Posterior vena cava (tissue), 2 donors: ENCODE measurements at regions of chr12 and their contacts with region 1.

Region 1: DNA sequence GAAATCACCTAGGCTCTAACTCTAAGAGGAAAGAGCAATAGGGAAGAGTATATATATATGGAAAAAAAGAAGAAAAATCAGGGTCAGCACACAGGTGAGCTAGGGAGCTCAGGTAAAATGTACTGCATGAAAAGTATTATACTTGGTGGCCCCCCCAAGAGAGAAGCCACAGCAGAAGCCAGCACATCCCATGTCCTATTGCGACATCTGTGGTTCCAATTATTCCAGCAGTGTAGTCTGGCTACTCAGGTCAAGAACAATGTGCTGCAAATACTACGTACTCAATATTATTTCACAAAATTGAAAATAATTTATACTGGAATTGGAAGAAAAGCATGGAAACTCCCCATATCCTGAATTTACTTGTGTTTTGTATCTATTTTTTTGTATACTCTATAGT is 85.5 kb downstream of the CEP83 start:
- DNase-seq: no peak

Region 2: GRCh38 chr12:94421868-94422740 is 48.0 kb after region 1 on chr12:
- intact Hi-C with region 1: loop called in 1 of 2 experiments (anchors 2 kb)
- DNase-seq: no peak